ENCODE measurements at regions of chr10 and their contacts with region 1.

Region 1: DNA sequence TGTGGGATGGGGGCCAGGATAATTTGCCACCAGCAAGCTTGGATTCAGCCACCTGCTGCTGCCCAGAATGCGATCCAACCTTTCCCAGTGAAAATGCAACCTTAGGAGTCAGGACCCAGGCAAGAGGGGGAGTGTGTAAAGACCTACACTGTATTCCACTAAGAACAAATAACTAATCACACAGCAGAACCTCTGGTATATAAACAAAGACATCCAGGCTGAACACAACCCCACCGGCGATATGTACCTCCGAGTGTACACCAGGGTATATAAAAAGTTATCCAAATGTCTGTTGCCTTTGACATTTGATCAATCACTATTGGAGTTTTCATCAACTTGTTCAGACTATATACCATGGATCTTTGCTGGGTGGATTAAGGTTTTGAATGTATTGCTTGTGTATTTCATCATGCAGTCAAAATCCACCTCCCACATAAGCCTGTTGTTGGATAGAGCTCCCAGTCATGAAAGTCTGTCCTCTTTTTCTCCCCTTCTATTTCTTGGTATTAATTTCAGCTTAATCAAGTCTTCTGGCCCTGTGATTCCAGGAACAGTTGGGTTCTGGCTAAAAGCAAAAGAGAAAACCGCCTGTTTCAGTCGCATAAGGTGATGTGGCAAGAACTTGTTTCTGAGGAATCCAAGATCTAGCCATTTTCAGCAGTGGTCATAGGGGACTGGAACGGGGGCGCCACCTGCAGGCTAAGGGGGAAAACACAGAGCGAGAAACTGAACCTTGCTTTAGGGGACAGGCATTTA is 290.7 kb downstream of the CCDC3 start:
- DNase-seq: peak; percentile 72 to 90
- H3K4me3 ChIP-seq: no peak overlapping the region
- H3K27ac ChIP-seq: peak overlapping the region; percentile 37 to 80
- H3K4me1 ChIP-seq: peaks cover 0 to 49% (median 42%) of the 10 kb centered on the region in 4 donors
- H3K27me3 ChIP-seq: no peaks in the 10 kb centered on the region
- CTCF ChIP-seq: peak; percentile 94 to 96

Region 2: GRCh38 chr10:12214763-12215218 is 496.0 kb before region 1 on chr10:
- intact Hi-C with region 1: loop called (anchors 5 kb)
- DNase-seq: no peak
- H3K4me3 ChIP-seq: peak overlapping the region; percentile 35 to 36
- H3K27ac ChIP-seq: peak overlapping the region; percentile 48 to 63
- H3K4me1 ChIP-seq: peaks cover 0 to 10% (median 3%) of the 10 kb centered on the region in 4 donors
- H3K27me3 ChIP-seq: no peaks in the 10 kb centered on the region
- CTCF ChIP-seq: peak; percentile 73 to 81

Region 3: GRCh38 chr10:12264204-12264940 is 446.4 kb before region 1 on chr10:
- intact Hi-C with region 1: loop called (anchors 2 kb)
- DNase-seq: peak; percentile 72 to 86
- H3K4me3 ChIP-seq: peak overlapping the region; percentile 40 to 41
- H3K27ac ChIP-seq: peak overlapping the region in 1 of 2 donors; percentile 16
- H3K4me1 ChIP-seq: peaks cover 0 to 7% (median 2%) of the 10 kb centered on the region in 4 donors
- H3K27me3 ChIP-seq: no peaks in the 10 kb centered on the region
- CTCF ChIP-seq: peak; percentile 81 to 90

Region 4: GRCh38 chr10:12782537-12782936 is 71.8 kb after region 1 on chr10:
- intact Hi-C with region 1: no loop called
- DNase-seq: no peak
- H3K4me3 ChIP-seq: no peak overlapping the region
- H3K27ac ChIP-seq: no peak overlapping the region
- H3K4me1 ChIP-seq: peaks cover 0 to 11% (median 3%) of the 10 kb centered on the region in 4 donors
- H3K27me3 ChIP-seq: no peaks in the 10 kb centered on the region
- CTCF ChIP-seq: peak; percentile 61 to 66

Region 5: DNA sequence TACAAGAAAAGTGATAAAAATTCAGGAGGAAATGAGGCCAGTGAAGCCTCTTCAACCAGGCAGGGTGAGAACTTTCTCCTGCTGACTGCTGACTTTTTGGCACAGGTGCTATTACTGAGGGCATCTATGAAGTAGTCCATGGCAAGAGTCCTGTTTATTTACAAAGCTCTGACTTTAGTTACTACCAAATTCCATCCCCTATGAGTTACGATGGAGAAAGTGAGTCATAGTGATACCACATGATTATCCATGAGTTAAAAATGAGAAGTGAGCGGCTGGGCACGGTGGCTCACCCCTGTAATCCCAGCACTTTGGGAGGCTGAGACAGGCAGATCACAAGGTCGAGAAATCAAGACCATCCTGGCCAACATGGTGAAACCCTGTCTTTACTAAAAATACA is 270.8 kb after region 1 on chr10:
- intact Hi-C with region 1: no loop called
- DNase-seq: no peak
- H3K4me3 ChIP-seq: no peak overlapping the region
- H3K27ac ChIP-seq: peak overlapping the region in 1 of 2 donors; percentile 37
- H3K4me1 ChIP-seq: peaks cover 0 to 44% (median 16%) of the 10 kb centered on the region in 4 donors
- H3K27me3 ChIP-seq: no peaks in the 10 kb centered on the region
- CTCF ChIP-seq: no peak

Region 6: DNA sequence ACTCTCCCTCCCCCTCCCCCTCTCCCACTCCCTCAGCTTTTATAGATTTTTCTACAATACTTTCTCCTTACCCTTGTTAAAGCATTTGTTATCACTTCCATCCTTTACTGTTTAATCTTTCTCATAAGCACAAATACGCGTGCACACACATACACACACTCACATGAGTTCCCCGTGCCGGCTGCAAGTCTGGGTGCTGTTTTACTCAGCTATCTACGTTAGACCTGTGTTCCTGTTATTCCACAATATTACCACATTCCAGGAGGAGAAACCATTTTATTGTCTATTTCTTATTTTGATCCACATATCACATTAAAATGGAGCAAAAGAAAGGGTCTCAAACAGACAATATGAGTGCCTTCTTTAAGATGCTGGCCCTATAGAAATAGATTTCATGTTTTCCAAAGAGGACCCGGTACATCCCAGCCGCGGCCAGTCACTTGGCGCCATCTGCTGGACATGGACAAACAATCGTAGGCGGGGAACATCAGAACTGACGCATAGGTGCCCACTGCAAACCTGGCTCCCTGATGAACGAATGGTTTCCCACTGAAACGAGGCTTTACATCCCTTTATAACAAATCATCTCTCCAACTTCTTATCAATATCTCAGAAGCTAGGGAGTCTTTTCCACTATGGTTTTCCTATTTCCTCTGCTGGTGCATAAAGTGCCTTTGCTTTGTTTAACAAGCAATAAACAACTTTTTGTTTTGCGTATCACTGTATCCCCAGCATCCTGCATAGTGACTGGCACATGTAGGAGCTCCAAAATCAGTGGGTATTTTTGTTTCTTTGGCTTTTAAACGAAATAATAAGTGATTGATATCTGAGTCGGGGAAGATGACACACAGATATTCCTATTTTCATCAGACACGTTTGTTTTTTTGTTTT is 364.0 kb after region 1 on chr10:
- intact Hi-C with region 1: loop called (anchors 10 kb)
- DNase-seq: peak; percentile 69 to 77
- H3K4me3 ChIP-seq: no peak overlapping the region
- H3K27ac ChIP-seq: no peak overlapping the region
- H3K4me1 ChIP-seq: no peaks in the 10 kb centered on the region
- H3K27me3 ChIP-seq: peaks cover 0 to 5% of the 10 kb centered on the region in 2 donors
- CTCF ChIP-seq: peak; percentile 79 to 86